ENCODE measurements at regions of chr17 and their contacts with region 1.

Region 1: GRCh38 chr17:41496820-41497408 is 7.2 kb upstream of the KRT36 start:
- DNase-seq: peak; percentile 37
- H3K4me3 ChIP-seq: no peak overlapping the region
- CTCF ChIP-seq: peak; percentile 96

Region 2: DNA sequence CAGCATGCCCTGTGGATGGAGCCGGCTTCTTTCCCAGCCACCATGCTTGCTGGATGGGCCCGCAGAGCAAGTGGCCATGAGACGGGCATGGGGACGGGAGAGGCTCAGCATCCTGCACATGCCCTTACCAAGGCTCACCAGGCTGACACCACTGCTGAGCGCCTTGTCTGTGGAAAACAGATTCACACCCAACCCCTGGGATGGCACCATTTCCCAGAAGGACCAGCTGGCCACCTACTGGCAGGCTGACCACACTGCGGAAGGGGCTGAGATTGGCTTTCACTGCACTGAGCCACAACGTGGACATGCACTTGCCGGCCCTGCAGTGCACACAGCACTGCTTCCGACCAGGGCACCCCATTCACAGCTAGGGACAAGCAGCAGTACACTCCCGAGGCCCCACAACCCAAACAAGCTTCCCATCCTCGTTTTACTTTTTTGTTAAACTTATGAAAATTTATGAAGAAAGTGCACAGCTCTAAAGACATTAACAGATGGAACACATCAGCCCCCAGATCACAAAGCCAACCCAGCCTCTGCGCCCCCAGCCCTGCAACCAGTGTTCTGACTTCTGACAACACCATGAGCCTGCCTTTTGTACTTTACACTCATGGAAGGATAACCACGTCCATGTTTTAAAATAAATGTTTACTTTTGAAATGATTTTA is 167.5 kb before region 1 on chr17:
- CTCF ChIA-PET with region 1: interaction called, 28 read pairs
- POLR2A ChIA-PET with region 1: no interaction called
- DNase-seq: no peak
- H3K4me3 ChIP-seq: no peak overlapping the region
- CTCF ChIP-seq: peak; percentile 95

Region 3: DNA sequence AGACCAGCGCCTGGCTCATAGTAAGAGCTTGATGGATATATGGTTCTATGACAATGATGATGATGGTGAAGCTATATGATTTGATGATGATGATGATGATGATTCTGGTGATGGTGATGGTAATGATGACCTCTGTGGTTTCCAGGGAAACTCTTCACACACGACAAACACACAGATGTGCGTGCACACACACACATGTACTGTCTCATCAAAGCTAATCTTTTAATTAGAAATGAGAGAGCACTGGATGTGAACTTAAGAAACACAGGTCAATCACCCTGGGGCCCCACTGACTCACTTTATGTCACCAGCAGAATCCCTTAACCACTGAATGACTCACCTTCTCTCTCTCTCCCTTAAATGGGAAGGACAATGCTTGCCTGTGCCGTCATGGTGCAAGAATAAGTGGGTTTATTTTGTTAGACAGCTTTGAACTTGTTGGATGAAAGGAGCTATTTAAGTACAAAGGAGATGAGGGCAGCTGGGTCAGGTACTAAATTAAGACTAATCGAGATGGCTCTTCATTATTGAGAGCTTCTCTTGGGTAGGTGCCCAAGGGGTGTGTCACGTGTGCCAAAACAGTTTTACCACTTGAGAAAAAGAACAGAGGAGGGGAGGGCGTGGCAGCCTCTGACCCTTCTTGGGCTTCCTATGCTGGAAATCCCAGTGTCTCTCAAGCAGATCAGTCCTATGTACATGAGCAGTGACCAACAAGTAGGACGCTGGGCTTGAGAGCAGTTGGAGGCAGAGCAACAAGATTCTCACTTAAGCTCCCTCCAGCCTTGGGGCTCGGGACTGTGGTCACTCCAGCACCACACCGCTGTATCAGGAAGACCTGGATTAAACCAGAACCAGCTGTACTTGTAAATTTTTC is 92.9 kb before region 1 on chr17:
- CTCF ChIA-PET with region 1: interaction called, 10 read pairs
- POLR2A ChIA-PET with region 1: no interaction called
- DNase-seq: peak; percentile 80
- H3K4me3 ChIP-seq: no peak overlapping the region
- CTCF ChIP-seq: no peak

Region 4: GRCh38 chr17:41510251-41511065 is 13.5 kb after region 1 on chr17:
- CTCF ChIA-PET with region 1: interaction called, 15 read pairs
- POLR2A ChIA-PET with region 1: interaction called, 3 read pairs
- DNase-seq: no peak
- H3K4me3 ChIP-seq: no peak overlapping the region
- CTCF ChIP-seq: no peak

Measured in AG04449 (cell line).